Caco-2 (cell line): ENCODE measurements at regions of chr4 and their contacts with region 1.

Region 1: DNA sequence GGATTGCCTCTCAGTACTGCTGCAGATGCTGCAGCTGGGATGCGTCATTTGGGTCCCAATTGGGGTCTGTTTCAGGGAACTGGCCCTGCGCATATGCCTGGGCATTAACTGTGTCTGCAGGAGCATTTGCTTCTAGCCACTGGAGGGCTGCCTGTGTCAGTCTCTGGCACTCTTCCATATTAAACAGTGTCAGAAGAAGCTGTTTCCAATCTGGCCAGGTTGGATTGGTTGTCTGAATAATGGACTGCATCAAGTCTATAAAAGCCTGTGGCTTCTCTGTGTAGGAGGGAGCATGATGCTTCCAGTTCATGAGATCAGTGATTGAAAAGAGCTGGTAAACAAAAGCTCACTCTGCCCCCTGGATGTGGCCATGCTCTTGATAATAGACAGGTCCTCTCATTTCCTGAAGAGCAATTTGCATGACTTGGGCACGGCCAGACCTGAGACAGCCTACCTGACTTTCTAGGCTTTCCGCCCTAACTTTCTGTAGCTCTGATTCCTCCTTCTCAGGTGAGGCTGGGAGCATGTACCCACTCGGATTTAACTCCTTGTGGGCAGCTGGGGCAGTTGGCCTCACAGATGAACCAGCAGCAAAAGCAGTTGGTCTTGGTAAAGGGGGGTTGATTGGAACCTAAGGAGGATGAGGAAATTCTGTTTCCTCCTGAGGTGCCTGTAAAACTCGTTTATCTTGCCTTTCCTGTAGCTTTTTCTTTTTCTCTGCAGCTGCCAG is 29.2 kb downstream of the SULT1E1 start:
- DNase-seq: peak; percentile 67 to 80
- H3K4me3 ChIP-seq: peak overlapping the region; percentile 41
- H3K4me3 Mint-ChIP-seq: peak overlapping the region; percentile 78
- H3K27ac Mint-ChIP-seq: peak overlapping the region; percentile 80
- H3K4me1 ChIP-seq: peaks cover 47% of the 10 kb centered on the region
- H3K4me1 Mint-ChIP-seq: peaks cover 13% of the 10 kb centered on the region
- H3K27me3 ChIP-seq: no peaks in the 10 kb centered on the region
- H3K27me3 Mint-ChIP-seq: no peaks in the 10 kb centered on the region
- CTCF ChIP-seq: peak; percentile 34 to 40

Region 2: DNA sequence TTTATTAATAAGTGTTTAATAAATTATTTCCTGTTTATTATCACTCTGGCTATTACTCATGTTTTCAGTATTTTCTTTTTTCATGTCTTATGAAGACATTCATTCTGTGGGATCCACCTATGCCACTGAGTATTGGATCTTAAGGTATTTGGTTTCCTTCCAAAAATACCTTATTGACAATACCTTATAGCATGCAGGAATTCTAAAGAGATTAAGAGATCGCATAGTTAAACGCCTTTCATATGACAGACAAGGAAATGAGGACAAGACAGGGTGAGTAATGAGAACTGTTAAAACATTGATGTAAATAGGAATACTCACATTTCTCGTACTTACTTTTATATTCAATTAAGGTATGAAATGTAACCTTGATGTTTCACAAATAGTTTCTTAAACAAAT is 1547.0 kb before region 1 on chr4:
- CTCF ChIA-PET with region 1: no interaction called
- POLR2A ChIA-PET with region 1: no interaction called
- intact Hi-C with region 1: loop called (anchors 5 kb)
- DNase-seq: no peak
- H3K4me3 ChIP-seq: no peak overlapping the region
- H3K4me3 Mint-ChIP-seq: no peak overlapping the region
- H3K27ac Mint-ChIP-seq: peak overlapping the region; percentile 82
- H3K4me1 ChIP-seq: peaks cover 41% of the 10 kb centered on the region
- H3K4me1 Mint-ChIP-seq: peaks cover 19% of the 10 kb centered on the region
- H3K27me3 ChIP-seq: no peaks in the 10 kb centered on the region
- H3K27me3 Mint-ChIP-seq: no peaks in the 10 kb centered on the region
- CTCF ChIP-seq: no peak

Region 3: GRCh38 chr4:69759189-69759604 is 71.5 kb before region 1 on chr4:
- CTCF ChIA-PET with region 1: no interaction called
- POLR2A ChIA-PET with region 1: no interaction called
- intact Hi-C with region 1: loop called (anchors 1 kb)
- DNase-seq: peak; percentile 53 to 70
- H3K4me3 ChIP-seq: 0 out of 2 replicates have a peak overlapping the region, but pooled peaks have one; percentile 5
- H3K4me3 Mint-ChIP-seq: peak overlapping the region; percentile 75
- H3K27ac Mint-ChIP-seq: peak overlapping the region; percentile 73
- H3K4me1 ChIP-seq: peaks cover 40% of the 10 kb centered on the region
- H3K4me1 Mint-ChIP-seq: peaks cover 23% of the 10 kb centered on the region
- H3K27me3 ChIP-seq: no peaks in the 10 kb centered on the region
- H3K27me3 Mint-ChIP-seq: no peaks in the 10 kb centered on the region
- CTCF ChIP-seq: no peak

Region 4: DNA sequence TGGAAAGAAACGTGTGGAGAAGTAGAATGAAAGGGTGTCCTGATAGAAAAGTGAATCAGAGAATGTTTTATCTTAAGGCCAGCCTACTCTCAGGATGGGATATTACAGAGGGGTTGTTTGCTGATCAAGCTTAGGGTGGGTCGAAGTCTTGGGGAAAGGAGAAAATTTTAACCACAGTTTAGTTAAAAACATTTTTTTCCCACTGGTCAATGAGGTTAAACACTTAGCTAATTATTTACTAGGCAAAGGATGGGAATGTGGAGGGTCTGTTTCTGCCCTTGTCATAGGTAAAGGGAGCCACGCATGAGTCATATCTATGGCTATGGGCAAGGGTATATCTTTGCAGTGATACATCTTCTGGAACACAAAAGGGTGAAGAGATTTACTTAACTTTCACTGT is 45.3 kb after region 1 on chr4:
- CTCF ChIA-PET with region 1: interaction called, 8 read pairs
- POLR2A ChIA-PET with region 1: no interaction called
- intact Hi-C with region 1: loop called (anchors 1 kb)
- DNase-seq: peak in 1 of 2 experiments; percentile 35
- H3K4me3 ChIP-seq: no peak overlapping the region
- H3K4me3 Mint-ChIP-seq: no peak overlapping the region
- H3K27ac Mint-ChIP-seq: peak overlapping the region; percentile 56
- H3K4me1 ChIP-seq: peaks cover 13% of the 10 kb centered on the region
- H3K4me1 Mint-ChIP-seq: peaks cover 23% of the 10 kb centered on the region
- H3K27me3 ChIP-seq: no peaks in the 10 kb centered on the region
- H3K27me3 Mint-ChIP-seq: no peaks in the 10 kb centered on the region
- CTCF ChIP-seq: no peak

Region 5: DNA sequence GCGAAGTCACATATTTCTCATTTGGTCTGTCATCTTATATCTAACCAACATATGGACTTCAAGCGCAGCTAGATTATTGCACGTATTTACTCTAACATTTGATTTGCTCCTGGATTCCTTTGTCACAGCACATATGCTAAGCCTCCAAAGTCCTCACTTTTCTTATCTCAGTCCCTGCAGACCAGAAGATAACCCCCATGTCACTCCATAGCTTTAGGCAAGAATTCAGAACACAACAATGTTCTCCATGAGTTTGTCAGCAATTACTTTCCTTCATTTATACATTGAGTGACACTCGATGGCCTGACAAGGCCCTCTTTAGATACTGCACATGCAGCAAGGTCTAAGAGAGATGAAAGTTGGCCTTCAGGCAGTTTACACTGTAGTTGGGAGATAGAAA is 160.3 kb after region 1 on chr4:
- CTCF ChIA-PET with region 1: no interaction called
- POLR2A ChIA-PET with region 1: no interaction called
- intact Hi-C with region 1: loop called (anchors 1 kb)
- DNase-seq: peak; percentile 66 to 69
- H3K4me3 ChIP-seq: no peak overlapping the region
- H3K4me3 Mint-ChIP-seq: peak overlapping the region; percentile 40
- H3K27ac Mint-ChIP-seq: peak overlapping the region; percentile 48
- H3K4me1 ChIP-seq: peaks cover 30% of the 10 kb centered on the region
- H3K4me1 Mint-ChIP-seq: peaks cover 19% of the 10 kb centered on the region
- H3K27me3 ChIP-seq: no peaks in the 10 kb centered on the region
- H3K27me3 Mint-ChIP-seq: no peaks in the 10 kb centered on the region
- CTCF ChIP-seq: no peak

Region 6: GRCh38 chr4:70269674-70270073 is 438.9 kb after region 1 on chr4:
- CTCF ChIA-PET with region 1: no interaction called
- POLR2A ChIA-PET with region 1: no interaction called
- intact Hi-C with region 1: loop called (anchors 10 kb)
- DNase-seq: peak in 1 of 2 experiments; percentile 1
- H3K4me3 ChIP-seq: no peak overlapping the region
- H3K4me3 Mint-ChIP-seq: no peak overlapping the region
- H3K27ac Mint-ChIP-seq: no peak overlapping the region
- H3K4me1 ChIP-seq: no peaks in the 10 kb centered on the region
- H3K4me1 Mint-ChIP-seq: no peaks in the 10 kb centered on the region
- H3K27me3 ChIP-seq: no peaks in the 10 kb centered on the region
- H3K27me3 Mint-ChIP-seq: no peaks in the 10 kb centered on the region
- CTCF ChIP-seq: peak in 1 of 2 experiments; percentile 15